AG04450 (cell line): ENCODE measurements at regions of chr15 and their contacts with region 1.

Region 1: GRCh38 chr15:51982013-51982769 is 10.6 kb upstream of the LEO1 start:
- DNase-seq: peak; percentile 54
- H3K4me3 ChIP-seq: no peak overlapping the region
- H3K27ac ChIP-seq: no peak overlapping the region
- H3K27me3 ChIP-seq: no peaks in the 10 kb centered on the region
- CTCF ChIP-seq: peak; percentile 72

Region 2: DNA sequence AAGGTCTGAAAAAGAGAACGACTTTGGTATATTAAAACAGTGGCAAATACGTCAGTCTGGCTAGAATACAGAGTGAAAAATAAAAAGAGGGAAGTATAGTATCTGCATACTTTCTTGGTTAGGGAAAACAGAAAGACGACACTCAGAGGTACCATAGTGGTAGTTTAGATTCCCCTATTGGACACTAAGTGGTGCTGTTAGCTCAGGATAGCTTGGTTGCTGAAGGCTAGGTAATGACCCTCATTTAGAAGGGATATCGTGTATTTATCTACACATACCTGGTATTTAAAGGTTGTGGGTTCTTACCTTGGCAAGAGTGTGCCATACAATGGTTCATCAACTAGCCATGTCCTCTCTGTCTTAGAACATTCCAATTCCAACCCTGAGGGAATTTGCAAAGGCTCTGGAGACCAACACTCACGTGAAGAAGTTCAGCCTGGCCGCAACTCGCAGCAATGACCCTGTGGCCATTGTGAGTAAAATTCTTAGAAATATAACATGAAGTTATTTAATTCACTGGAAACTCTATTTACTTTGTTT is 199.8 kb before region 1 on chr15:
- CTCF ChIA-PET with region 1: no interaction called
- POLR2A ChIA-PET with region 1: no interaction called
- DNase-seq: no peak
- H3K4me3 ChIP-seq: no peak overlapping the region
- H3K27ac ChIP-seq: no peak overlapping the region
- H3K27me3 ChIP-seq: no peaks in the 10 kb centered on the region
- CTCF ChIP-seq: peak; percentile 31; the same call in 1 of the 2 replicates

Region 3: GRCh38 chr15:52013151-52013791 is 31.1 kb after region 1 on chr15:
- CTCF ChIA-PET with region 1: no interaction called
- POLR2A ChIA-PET with region 1: no interaction called
- DNase-seq: no peak
- H3K4me3 ChIP-seq: no peak overlapping the region
- H3K27ac ChIP-seq: no peak overlapping the region
- H3K27me3 ChIP-seq: no peaks in the 10 kb centered on the region
- CTCF ChIP-seq: no peak

Region 4: DNA sequence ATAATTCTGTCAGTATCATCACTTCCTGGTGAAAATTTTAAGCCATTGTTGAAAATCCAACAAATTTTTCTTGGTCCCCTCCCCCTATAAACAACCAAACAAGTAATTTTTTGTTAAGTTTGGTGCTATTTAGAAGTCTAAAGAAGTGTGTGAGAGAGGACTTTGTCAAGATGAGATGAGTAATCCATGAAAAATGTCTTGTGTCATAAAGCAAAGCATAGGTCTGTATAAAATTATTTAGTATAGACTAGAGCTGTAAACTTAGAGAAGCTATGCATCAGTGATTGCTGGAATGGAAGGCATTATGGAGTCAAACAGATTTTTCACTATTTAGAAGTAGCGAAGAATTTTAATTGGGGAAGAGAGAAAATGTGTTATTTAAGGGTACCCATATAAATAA is 68.2 kb after region 1 on chr15:
- CTCF ChIA-PET with region 1: no interaction called
- POLR2A ChIA-PET with region 1: no interaction called
- DNase-seq: peak; percentile 15
- H3K4me3 ChIP-seq: no peak overlapping the region
- H3K27ac ChIP-seq: no peak overlapping the region
- H3K27me3 ChIP-seq: no peaks in the 10 kb centered on the region
- CTCF ChIP-seq: no peak

Region 5: GRCh38 chr15:52078876-52079700 is 96.9 kb after region 1 on chr15:
- CTCF ChIA-PET with region 1: interaction called, 13 read pairs
- POLR2A ChIA-PET with region 1: no interaction called
- DNase-seq: no peak
- H3K4me3 ChIP-seq: no peak overlapping the region
- H3K27ac ChIP-seq: no peak overlapping the region
- H3K27me3 ChIP-seq: no peaks in the 10 kb centered on the region
- CTCF ChIP-seq: peak; percentile 79